ENCODE measurements at regions of chr11 and their contacts with region 1.

Region 1: DNA sequence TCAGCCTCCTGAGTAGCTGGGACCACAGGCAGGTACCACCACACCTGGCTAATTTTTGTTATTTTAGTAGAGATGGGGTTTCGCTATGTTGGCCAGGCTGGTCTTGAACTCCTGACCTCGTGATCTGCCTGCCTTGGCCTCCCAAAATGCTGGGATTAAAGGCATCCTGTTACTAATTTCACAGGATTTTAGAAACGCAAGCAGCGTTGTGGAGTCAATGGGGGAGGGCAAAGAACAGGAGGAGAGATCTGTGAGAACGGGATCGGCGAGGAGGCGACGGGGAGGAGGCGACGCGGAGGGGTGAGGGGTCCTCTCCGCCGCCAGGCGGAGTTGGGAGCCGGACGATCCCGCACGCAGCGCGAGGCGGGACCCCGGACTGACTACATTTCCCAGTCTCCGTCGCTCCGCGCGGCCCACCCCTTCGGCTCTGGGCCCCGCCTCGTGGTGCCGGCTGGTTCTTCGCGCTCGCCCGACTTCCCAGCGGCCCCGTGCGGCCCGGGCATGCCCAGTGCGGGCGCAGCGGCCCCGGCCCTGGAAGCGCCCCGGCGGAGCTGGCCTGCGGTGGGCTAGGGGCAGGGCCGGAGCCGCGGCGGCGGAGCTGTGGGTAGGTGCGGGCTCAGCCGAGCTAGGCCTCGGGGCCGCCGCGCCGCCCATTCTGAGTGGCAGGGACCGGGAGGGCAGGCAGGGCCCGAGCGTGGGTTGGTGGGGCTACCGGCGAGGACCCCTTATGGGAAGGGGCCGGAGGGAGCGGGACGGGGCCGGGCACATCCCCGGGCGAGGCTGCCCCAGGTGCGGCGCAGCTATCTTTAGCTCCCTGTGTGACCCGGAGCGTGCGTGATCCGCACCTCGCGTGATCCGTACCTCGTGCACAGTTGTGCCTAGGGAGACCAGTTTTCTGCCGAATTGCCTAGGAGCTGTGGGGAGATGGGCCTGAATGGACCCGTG is at the start of gene EI24:
- DNase-seq: peak; percentile 91
- H3K4me3 Mint-ChIP-seq: peak within 1 kb of the TSS; percentile 94
- H3K27ac Mint-ChIP-seq: peak within 1 kb of the TSS; percentile 92
- H3K4me1 Mint-ChIP-seq: peaks cover 32% of the 10 kb centered on the region
- H3K27me3 Mint-ChIP-seq: no peaks in the 10 kb centered on the region
- total RNA-seq, gene EI24: 28.8 to 33.0 TPM

Region 2: GRCh38 chr11:124953753-124954589 is 615.3 kb before region 1 on chr11 and contains the start of gene CCDC15:
- CTCF ChIA-PET with region 1: no interaction called
- intact Hi-C with region 1: loop called (anchors 5 kb)
- DNase-seq: peak; percentile 97
- H3K4me3 Mint-ChIP-seq: no peak within 1 kb of the TSS
- H3K27ac Mint-ChIP-seq: no peak within 1 kb of the TSS
- H3K4me1 Mint-ChIP-seq: peaks cover 7% of the 10 kb centered on the region
- H3K27me3 Mint-ChIP-seq: no peaks in the 10 kb centered on the region
- total RNA-seq, gene CCDC15: 6.1 to 7.3 TPM

Region 3: DNA sequence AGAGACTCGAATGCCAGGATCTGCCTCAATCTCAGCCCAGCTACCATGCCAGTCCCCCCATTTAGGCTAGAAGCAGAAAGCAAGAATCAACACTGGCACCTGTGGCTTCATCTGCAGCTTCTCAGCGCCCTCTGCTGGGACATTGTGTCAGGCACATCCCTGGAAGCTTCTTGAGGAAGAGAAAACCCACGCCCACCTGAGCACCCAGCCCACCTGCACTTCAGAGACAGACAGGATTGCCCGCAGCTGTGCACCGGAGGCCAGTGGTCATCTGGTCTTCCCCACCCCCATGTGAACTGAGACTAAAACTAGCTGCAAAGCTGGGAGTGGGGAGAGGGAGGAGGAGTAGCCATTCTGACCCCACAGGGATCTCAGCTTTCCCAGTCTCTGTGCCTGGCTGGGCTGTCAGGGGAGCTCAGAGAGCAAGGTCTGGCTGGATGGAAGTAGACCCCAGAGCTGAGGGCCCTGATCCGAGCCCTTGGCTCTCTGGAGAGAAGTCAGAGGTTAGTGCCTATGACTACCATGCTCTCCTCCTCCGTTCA is 140.0 kb before region 1 on chr11:
- CTCF ChIA-PET with region 1: no interaction called
- intact Hi-C with region 1: loop called (anchors 5 kb)
- DNase-seq: peak; percentile 77
- H3K4me3 Mint-ChIP-seq: no peak overlapping the region
- H3K27ac Mint-ChIP-seq: no peak overlapping the region
- H3K4me1 Mint-ChIP-seq: no peaks in the 10 kb centered on the region
- H3K27me3 Mint-ChIP-seq: peaks cover 6% of the 10 kb centered on the region

Region 4: GRCh38 chr11:125494974-125495725 is 74.1 kb before region 1 on chr11:
- CTCF ChIA-PET with region 1: no interaction called
- intact Hi-C with region 1: loop called (anchors 1 kb)
- DNase-seq: no peak
- H3K4me3 Mint-ChIP-seq: peak overlapping the region; percentile 78
- H3K27ac Mint-ChIP-seq: no peak overlapping the region
- H3K4me1 Mint-ChIP-seq: peaks cover 19% of the 10 kb centered on the region
- H3K27me3 Mint-ChIP-seq: peaks cover 41% of the 10 kb centered on the region

Region 5: DNA sequence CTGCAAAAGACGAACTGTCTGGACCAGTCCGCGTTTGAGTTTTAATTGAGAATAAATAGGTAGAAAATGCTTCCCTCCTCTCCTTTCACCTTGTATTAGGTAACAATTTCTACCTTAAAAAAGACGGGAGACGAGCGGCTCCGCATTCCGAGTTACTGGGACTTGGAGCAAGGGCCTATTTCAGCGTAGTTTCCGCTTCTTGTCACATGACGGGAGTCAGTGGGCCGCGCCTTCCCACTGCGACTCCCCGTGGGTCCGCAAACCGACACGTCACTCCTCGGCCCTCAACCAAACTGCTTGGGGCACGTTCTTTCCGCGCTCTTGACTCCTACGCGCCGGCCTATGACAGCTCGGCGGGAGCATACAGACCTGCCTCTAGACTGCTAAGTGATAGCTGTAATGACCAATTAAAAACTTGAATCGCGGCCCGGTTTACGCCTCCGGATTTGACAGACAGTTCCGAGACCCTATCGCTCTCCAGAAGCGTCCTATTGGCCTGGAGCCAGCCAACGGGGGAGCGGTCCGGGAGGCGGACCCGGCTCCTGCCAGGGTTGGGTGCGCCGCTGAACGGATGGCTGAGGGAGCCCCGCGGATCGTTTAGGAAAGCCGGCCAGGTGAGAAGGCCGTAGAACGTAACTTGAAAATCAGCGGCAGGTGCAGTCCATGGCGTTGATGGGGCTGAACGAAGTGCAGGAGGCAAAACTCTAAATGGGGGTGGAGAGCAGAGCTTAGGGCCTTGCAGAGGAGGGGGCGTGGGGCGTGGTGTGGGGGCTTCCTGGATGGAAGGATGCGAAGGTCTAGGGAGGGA is 23.3 kb after region 1 on chr11 and contains the start of gene STT3A:
- CTCF ChIA-PET with region 1: interaction called, 22 read pairs
- intact Hi-C with region 1: loop called (anchors 1 kb)
- DNase-seq: peak; percentile 99
- H3K4me3 Mint-ChIP-seq: peak within 1 kb of the TSS; percentile 100
- H3K27ac Mint-ChIP-seq: peak within 1 kb of the TSS; percentile 92
- H3K4me1 Mint-ChIP-seq: peaks cover 51% of the 10 kb centered on the region
- H3K27me3 Mint-ChIP-seq: no peaks in the 10 kb centered on the region
- total RNA-seq, gene STT3A: 111 to 113 TPM

Region 6: DNA sequence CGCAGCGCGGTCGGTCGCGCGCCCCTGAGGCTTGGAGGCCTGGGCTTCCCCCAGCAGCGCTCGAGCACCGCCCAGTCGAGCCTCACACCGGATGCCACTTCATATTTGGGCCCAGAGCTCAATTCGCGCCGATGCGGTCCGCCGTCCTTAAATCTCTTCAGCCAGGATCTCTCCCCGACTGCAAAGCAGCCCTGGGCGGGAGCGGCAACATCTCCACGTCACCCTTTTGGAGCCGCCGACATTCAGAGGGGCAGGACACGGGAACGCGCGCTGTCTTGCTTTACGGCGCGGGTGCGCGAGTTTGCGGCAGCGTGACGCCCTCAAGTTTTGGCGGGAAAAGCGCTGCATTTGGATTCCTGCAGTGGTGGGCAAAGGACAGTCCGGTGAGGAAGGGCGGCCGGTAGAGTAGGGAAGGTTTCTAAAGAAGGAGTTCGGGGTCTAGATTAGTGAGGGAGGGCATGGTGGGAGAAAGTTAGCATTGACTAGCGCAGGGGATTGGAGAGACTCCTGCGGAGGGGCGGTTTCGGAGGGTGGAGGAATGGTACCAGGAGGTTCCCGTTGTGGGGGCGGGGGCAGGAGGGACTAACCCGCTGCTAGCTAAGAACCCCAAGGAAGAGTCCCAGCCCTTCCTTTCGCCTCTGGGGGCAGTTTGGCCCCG is 56.5 kb after region 1 on chr11:
- CTCF ChIA-PET with region 1: interaction called, 4 read pairs
- intact Hi-C with region 1: loop called (anchors 1 kb)
- DNase-seq: peak; percentile 90
- H3K4me3 Mint-ChIP-seq: peak overlapping the region; percentile 89
- H3K27ac Mint-ChIP-seq: peak overlapping the region; percentile 99
- H3K4me1 Mint-ChIP-seq: peaks cover 21% of the 10 kb centered on the region
- H3K27me3 Mint-ChIP-seq: no peaks in the 10 kb centered on the region

Region 7: DNA sequence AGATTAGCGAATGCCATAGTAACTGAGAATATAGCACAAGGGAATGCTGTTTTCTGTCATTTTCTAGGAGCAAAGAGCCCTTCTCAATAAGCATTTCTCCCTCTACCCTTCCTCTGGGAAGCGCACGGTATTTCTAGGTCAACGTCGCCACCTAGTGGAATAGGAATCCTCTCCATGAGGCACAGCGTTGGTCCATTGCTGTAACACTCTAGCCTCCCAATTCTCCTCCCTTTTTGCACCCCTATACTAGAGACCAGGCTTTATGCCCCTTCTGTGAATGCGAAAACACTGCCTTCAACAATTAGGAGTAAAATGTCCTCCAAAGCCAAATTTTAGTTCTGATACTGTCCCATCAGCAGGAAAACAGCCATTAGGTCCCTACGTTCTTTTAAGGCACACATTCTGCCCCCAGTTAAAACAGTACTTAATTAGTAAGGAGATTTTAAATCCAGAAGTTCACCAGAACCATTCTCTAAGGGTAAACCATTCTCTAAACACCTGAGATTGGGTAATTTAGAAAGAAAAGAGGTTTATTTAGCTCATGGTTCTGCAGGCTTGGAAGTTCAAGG is 305.4 kb after region 1 on chr11:
- CTCF ChIA-PET with region 1: no interaction called
- intact Hi-C with region 1: loop called (anchors 5 kb)
- DNase-seq: peak; percentile 74
- H3K4me3 Mint-ChIP-seq: no peak overlapping the region
- H3K27ac Mint-ChIP-seq: no peak overlapping the region
- H3K4me1 Mint-ChIP-seq: no peaks in the 10 kb centered on the region
- H3K27me3 Mint-ChIP-seq: peaks cover 1% of the 10 kb centered on the region